ENCODE measurements at regions of chr16 and their contacts with region 1.

Region 1: DNA sequence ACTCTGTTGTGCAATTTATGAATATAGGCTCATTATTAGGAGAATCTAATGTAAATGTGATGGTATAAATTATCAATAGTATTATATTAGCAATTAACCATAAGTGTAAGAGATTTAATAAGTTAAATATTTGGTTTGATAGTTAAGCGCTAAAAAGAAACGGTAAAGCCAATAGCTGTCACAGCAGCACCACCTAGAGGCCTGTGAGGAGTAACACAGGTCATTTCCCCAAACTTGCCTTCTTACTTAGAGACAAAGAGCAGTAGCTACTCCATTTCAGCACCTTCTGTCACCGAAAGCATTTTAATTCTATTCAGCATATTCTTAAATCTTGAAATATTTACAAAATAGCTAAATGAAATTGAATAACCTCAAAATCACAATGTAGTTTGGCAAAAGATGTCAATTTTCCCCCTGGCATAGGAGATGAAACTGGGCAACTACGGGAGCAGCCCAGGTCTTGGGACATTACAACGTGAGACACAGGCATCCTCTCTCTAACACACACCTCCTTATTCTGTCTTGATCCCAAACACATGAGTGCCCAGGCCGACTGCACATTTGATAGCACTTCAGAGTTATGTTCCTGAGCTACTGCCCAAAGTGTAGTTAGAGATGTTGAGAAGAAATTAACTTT is 14.2 kb upstream of the DYNLRB2 start:
- DNase-seq: peak; percentile 66
- H3K4me3 Mint-ChIP-seq: no peak overlapping the region
- H3K27ac Mint-ChIP-seq: no peak overlapping the region
- H3K4me1 Mint-ChIP-seq: peaks cover 11% of the 10 kb centered on the region
- H3K27me3 Mint-ChIP-seq: no peaks in the 10 kb centered on the region

Region 2: DNA sequence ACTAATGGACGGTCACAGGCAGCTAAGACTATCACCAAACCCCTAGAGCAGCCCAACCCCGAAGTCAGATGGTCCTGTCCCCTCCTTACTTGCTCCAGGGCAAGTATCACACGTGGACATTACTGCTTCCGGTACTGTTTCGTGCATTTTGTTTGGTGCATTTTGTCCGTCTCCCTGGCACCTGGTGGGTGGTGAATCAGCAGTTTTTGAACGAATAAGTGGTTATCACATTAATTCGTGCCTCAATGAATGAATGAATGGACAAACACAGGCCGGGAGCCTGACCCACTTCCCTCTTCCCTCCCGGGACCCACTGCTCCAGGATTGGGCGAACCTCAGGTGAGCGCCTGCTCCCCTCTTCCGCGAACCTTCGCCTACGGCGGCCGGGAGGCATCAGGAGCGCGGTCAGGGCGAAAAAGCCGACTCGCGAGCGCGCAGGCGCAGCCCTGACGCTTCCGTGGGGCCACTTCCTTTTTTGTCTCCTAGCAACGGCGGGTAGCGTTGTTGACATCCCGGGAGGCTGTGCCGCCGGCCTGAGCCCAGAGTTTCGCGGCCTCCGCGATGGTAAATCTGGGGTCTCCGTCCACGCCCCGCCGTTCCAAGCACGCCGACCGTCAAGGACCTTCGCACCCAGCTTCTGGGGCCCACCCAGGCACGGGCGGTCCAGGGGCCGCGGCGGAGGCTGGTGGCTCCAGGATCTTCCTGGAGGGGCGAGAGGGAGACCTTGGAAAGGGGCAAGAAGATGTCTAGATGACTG is 14.2 kb after region 1 on chr16 and contains the start of gene DYNLRB2:
- CTCF ChIA-PET with region 1: interaction called, 23 read pairs
- DNase-seq: peak; percentile 94
- H3K4me3 Mint-ChIP-seq: peak within 1 kb of the TSS; percentile 89
- H3K27ac Mint-ChIP-seq: peak within 1 kb of the TSS; percentile 95
- H3K4me1 Mint-ChIP-seq: peaks cover 25% of the 10 kb centered on the region
- H3K27me3 Mint-ChIP-seq: peaks cover 20% of the 10 kb centered on the region

Region 3: DNA sequence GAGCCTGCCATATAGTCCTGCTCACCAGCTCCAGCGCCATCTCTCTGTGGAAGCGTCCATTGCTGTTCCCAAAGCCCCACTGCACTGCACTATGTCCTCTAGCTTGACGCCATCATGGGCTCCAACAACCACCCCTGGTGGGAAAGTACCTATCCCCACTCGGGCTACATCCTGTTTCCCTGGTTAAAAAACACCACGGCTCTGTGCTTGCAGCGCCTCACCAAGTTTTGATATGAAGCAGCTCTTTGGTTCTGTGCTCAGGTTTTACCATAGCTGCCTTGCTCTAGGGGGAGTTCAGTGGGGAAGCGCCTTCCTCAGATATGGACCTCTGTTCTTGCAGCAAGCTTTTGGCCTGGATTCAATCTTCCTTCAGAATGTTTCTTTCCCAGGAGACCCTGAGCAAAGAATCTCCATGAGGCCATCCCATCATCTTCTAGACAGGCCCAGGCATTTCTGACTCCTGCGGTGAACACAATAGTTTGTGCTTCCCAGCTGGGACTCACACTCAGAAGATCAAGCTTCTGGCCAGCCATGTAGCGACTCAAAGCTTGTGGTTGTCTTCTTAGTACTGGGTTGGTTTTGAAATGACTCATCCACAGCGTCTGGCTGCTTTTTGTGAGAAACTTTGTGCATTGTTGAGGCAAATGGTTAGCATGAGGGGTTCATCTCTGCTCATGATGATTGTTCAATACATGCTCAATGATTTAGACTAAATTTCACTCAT is 53.7 kb after region 1 on chr16:
- CTCF ChIA-PET with region 1: interaction called, 46 read pairs
- DNase-seq: peak; percentile 86
- H3K4me3 Mint-ChIP-seq: peak overlapping the region; percentile 60
- H3K27ac Mint-ChIP-seq: peak overlapping the region; percentile 91
- H3K4me1 Mint-ChIP-seq: peaks cover 66% of the 10 kb centered on the region
- H3K27me3 Mint-ChIP-seq: peaks cover 4% of the 10 kb centered on the region

Region 4: DNA sequence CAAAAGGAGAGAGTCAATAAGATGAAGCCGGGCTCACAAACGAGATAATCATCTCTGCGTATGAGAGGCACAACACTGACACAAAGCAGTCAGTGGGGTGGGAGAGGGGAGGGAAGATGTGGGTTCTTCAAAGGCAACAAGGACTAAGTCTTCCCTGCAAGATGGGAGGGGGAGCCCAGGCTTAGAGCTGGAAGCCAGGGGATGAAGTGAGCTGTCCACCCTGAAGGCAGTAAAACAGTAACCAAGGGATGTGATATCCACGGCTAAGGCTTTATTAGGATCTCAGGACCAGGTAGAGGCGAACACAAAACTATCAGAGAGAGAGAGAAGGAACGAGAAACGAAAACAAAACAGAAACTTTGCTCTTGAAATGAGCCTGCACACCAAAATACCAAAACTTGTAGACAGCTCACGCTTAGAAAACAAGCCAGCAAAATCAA is 130.2 kb after region 1 on chr16:
- CTCF ChIA-PET with region 1: interaction called, 13 read pairs
- DNase-seq: peak; percentile 69
- H3K4me3 Mint-ChIP-seq: peak overlapping the region; percentile 77
- H3K27ac Mint-ChIP-seq: peak overlapping the region; percentile 96
- H3K4me1 Mint-ChIP-seq: peaks cover 38% of the 10 kb centered on the region
- H3K27me3 Mint-ChIP-seq: no peaks in the 10 kb centered on the region

Region 5: GRCh38 chr16:80816365-80816764 is 289.8 kb after region 1 on chr16:
- CTCF ChIA-PET with region 1: interaction called, 49 read pairs
- DNase-seq: no peak
- H3K4me3 Mint-ChIP-seq: no peak overlapping the region
- H3K27ac Mint-ChIP-seq: no peak overlapping the region
- H3K4me1 Mint-ChIP-seq: peaks cover 3% of the 10 kb centered on the region
- H3K27me3 Mint-ChIP-seq: peaks cover 9% of the 10 kb centered on the region

Region 6: GRCh38 chr16:80831039-80831438 is 304.5 kb after region 1 on chr16:
- CTCF ChIA-PET with region 1: interaction called, 89 read pairs
- DNase-seq: no peak
- H3K4me3 Mint-ChIP-seq: no peak overlapping the region
- H3K27ac Mint-ChIP-seq: no peak overlapping the region
- H3K4me1 Mint-ChIP-seq: no peaks in the 10 kb centered on the region
- H3K27me3 Mint-ChIP-seq: peaks cover 28% of the 10 kb centered on the region

Measured in activated naive CD4-positive, alpha-beta T cell treated with anti-CD3 and anti-CD28 coated beads, Interleukin-2, amount 10 ng/mL, durations not matched to agents 7 days and 5 days (primary cell).